Naive thymus-derived CD4-positive, alpha-beta T cell (primary cell): ENCODE measurements at regions of chr6 and their contacts with region 1.

Region 1: DNA sequence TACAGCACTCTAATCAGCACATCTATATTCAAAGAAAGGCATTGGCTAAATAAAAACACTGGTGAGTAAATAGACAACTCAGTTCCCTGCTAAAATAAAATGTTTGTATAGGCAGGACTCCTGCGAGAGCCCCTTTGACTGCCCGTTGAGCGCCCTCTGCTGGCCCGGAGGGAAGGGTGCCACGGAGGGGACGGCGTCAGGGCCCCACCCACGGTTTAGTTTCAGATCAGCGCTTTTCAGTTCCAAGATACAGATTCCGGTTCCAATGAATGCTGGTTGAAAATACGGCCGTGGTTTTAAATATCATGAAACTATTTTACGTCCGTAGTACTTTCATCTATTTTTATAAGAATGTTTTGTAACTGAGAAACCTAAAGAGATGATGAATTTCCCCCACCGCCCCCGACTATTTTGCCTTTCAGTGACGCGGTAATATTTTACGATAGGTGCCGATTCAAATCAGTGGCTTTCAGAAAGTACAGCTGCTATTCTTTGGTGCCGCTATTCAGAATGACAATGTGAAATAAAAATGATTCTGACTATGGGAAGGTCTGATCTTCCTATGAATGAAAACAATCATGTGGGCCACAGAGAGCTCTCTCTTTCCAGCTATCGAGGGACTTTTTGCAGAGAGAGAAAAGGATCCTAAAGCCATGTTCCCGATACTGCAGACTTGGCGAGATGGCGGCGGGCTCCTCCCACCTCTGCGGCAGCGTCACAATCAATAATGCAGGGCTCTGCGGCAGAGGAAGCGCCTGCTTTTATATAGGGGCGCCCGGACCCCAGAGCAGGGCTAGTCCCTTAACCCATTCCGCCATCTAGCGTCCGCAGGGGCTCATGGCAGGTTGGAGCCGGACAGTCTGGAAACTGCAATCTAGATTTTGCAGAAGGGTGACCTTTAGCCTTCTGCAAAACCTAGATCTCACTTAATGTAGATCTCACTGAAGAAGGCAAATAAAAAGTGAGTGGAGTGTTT is 10.6 kb upstream of the CCN6 start:
- DNase-seq: peak; percentile 82 to 93 (median 90)
- ATAC-seq: peak; percentile 95
- H3K4me3 ChIP-seq: peak overlapping the region; percentile 92
- H3K4me3 Mint-ChIP-seq: peak overlapping the region; percentile 92 to 99 (median 98)
- H3K27ac ChIP-seq: peak overlapping the region; percentile 91
- H3K27ac Mint-ChIP-seq: peak overlapping the region; percentile 96 to 100 (median 99)
- H3K4me1 ChIP-seq: peaks cover 5 to 24% of the 10 kb centered on the region in 2 donors
- H3K4me1 Mint-ChIP-seq: peaks cover 10 to 51% (median 35%) of the 10 kb centered on the region in 7 donors
- H3K27me3 ChIP-seq: no peaks in the 10 kb centered on the region
- H3K27me3 Mint-ChIP-seq: no peaks in the 10 kb centered on the region

Region 2: GRCh38 chr6:111057074-111057752 is 986.1 kb before region 1 on chr6:
- CTCF ChIA-PET with region 1: no interaction called
- POLR2A ChIA-PET with region 1: no interaction called
- intact Hi-C with region 1: loop called (anchors 1 kb)
- DNase-seq: peak in 6 of 9 donors; percentile 22 to 54 (median 40)
- ATAC-seq: peak; percentile 76
- H3K4me3 ChIP-seq: no peak overlapping the region
- H3K4me3 Mint-ChIP-seq: peak overlapping the region in 1 of 10 donors; percentile 4
- H3K27ac ChIP-seq: no peak overlapping the region
- H3K27ac Mint-ChIP-seq: no peak overlapping the region
- H3K4me1 ChIP-seq: no peaks in the 10 kb centered on the region
- H3K4me1 Mint-ChIP-seq: peaks cover 0 to 6% (median 2%) of the 10 kb centered on the region in 7 donors
- H3K27me3 ChIP-seq: no peaks in the 10 kb centered on the region
- H3K27me3 Mint-ChIP-seq: peaks cover 0 to 6% (median 0%) of the 10 kb centered on the region in 5 donors

Region 3: GRCh38 chr6:111478749-111479148 is 564.6 kb before region 1 on chr6:
- CTCF ChIA-PET with region 1: interaction called, 5 read pairs
- POLR2A ChIA-PET with region 1: no interaction called
- intact Hi-C with region 1: loop called (anchors 1 kb)
- DNase-seq: peak in 7 of 9 donors; percentile 23 to 61 (median 44)
- ATAC-seq: peak; percentile 21
- H3K4me3 ChIP-seq: no peak overlapping the region
- H3K4me3 Mint-ChIP-seq: peak overlapping the region in 1 of 10 donors; percentile 26
- H3K27ac ChIP-seq: peak overlapping the region; percentile 24
- H3K27ac Mint-ChIP-seq: peak overlapping the region in 7 of 9 donors; percentile 31 to 77 (median 62)
- H3K4me1 ChIP-seq: peaks cover 13 to 14% of the 10 kb centered on the region in 2 donors
- H3K4me1 Mint-ChIP-seq: peaks cover 28 to 57% (median 50%) of the 10 kb centered on the region in 7 donors
- H3K27me3 ChIP-seq: no peaks in the 10 kb centered on the region
- H3K27me3 Mint-ChIP-seq: no peaks in the 10 kb centered on the region

Region 4: GRCh38 chr6:111709615-111710398 is 333.5 kb before region 1 on chr6:
- CTCF ChIA-PET with region 1: interaction called, 61 read pairs
- POLR2A ChIA-PET with region 1: interaction called, 6 read pairs
- intact Hi-C with region 1: loop called (anchors 1 kb)
- DNase-seq: peak in 8 of 9 donors; percentile 43 to 78 (median 71)
- ATAC-seq: peak; percentile 89
- H3K4me3 ChIP-seq: no peak overlapping the region
- H3K4me3 Mint-ChIP-seq: peak overlapping the region in 8 of 10 donors; percentile 2 to 67 (median 53)
- H3K27ac ChIP-seq: peak overlapping the region; percentile 59
- H3K27ac Mint-ChIP-seq: peak overlapping the region; percentile 53 to 98 (median 93)
- H3K4me1 ChIP-seq: peaks cover 32 to 43% of the 10 kb centered on the region in 2 donors
- H3K4me1 Mint-ChIP-seq: peaks cover 32 to 64% (median 56%) of the 10 kb centered on the region in 7 donors
- H3K27me3 ChIP-seq: no peaks in the 10 kb centered on the region
- H3K27me3 Mint-ChIP-seq: no peaks in the 10 kb centered on the region

Region 5: DNA sequence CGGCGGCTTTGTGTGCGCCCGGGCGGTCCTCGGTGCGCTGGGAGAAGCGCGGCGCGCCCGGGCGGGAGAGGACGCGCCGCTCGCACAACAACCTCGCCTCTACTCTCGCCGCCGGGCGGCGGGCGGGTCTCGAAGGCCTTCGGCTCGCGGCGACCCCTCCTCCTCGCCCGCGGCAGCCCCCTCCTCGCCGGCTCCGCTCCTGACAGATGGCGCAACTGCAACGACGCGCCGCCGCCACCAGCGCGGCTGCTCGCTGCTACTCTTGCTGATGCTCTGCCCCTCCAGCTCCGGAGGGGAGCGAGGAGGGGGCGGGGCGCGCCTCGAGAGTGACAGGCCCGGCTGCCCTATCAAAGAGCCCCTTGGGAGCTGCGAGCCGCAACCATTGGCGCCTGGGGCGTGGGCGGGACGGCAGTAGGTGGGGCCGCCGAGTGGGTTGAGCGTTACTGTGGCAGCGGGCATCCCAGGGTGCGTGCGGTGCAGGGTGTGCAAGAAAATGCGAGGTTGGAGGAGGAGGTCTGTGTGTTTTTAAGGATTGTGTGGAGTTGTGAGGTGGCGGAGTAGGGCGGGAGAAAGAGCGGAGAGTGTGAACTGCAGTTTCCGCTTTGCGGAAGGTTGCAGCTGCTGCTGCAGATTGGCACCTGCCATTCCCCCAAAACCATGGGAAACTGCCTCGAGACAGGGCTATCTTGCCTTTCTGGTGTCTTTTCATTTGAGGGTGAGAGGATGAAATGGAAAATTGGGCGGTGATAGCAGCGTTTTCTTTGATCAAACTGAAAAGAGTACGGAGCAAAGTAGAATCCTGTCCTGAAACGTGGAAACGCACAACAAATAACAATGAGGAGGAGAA is 169.9 kb before region 1 on chr6 and contains the start of gene FYN:
- CTCF ChIA-PET with region 1: interaction called, 3 read pairs
- POLR2A ChIA-PET with region 1: interaction called, 13 read pairs
- intact Hi-C with region 1: loop called (anchors 1 kb)
- DNase-seq: peak; percentile 97 to 100 (median 99)
- ATAC-seq: peak; percentile 96
- H3K4me3 ChIP-seq: peak within 1 kb of the TSS; percentile 89
- H3K4me3 Mint-ChIP-seq: peak within 1 kb of the TSS; percentile 95 to 100 (median 98)
- H3K27ac ChIP-seq: peak within 1 kb of the TSS; percentile 86
- H3K27ac Mint-ChIP-seq: peak within 1 kb of the TSS; percentile 93 to 99 (median 96)
- H3K4me1 ChIP-seq: peaks cover 32 to 34% of the 10 kb centered on the region in 2 donors
- H3K4me1 Mint-ChIP-seq: peaks cover 22 to 45% (median 38%) of the 10 kb centered on the region in 7 donors
- H3K27me3 ChIP-seq: no peaks in the 10 kb centered on the region
- H3K27me3 Mint-ChIP-seq: no peaks in the 10 kb centered on the region
- total RNA-seq, gene FYN: 200 to 720 (median 447) TPM

Region 6: GRCh38 chr6:111950661-111951496 is 92.4 kb before region 1 on chr6:
- CTCF ChIA-PET with region 1: no interaction called
- POLR2A ChIA-PET with region 1: no interaction called
- intact Hi-C with region 1: no loop called
- DNase-seq: no peak
- ATAC-seq: no peak
- H3K4me3 ChIP-seq: no peak overlapping the region
- H3K4me3 Mint-ChIP-seq: no peak overlapping the region
- H3K27ac ChIP-seq: no peak overlapping the region
- H3K27ac Mint-ChIP-seq: no peak overlapping the region
- H3K4me1 ChIP-seq: no peaks in the 10 kb centered on the region
- H3K4me1 Mint-ChIP-seq: peaks cover 7 to 22% (median 18%) of the 10 kb centered on the region in 7 donors
- H3K27me3 ChIP-seq: no peaks in the 10 kb centered on the region
- H3K27me3 Mint-ChIP-seq: peaks cover 0 to 31% (median 0%) of the 10 kb centered on the region in 5 donors

Region 7: DNA sequence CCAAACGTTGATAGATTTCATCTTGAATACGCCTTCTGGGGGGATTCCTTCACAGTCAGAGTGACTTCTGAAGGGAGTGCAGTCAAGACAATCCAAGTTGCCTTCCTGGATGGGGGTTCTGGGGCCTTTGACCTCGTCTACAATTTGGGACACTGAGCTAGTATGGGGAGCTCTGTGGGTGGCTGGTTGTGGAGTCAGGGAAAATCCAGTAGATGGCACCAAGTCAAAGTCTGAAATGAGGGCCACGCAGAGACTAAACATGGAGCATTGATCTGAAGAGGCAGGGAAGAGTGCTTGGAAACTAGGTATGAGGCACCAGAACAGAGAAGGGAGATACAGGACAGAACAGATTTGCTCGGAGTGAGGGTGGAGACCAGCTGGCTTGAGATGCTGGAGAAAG is 33.0 kb before region 1 on chr6:
- CTCF ChIA-PET with region 1: interaction called, 339 read pairs
- POLR2A ChIA-PET with region 1: interaction called, 175 read pairs
- intact Hi-C with region 1: loop called (anchors 1 kb)
- DNase-seq: peak in 5 of 9 donors; percentile 37 to 57 (median 45)
- ATAC-seq: peak; percentile 56
- H3K4me3 ChIP-seq: no peak overlapping the region
- H3K4me3 Mint-ChIP-seq: peak overlapping the region in 1 of 10 donors; percentile 9
- H3K27ac ChIP-seq: no peak overlapping the region
- H3K27ac Mint-ChIP-seq: peak overlapping the region in 7 of 9 donors; percentile 0 to 41 (median 7)
- H3K4me1 ChIP-seq: no peaks in the 10 kb centered on the region
- H3K4me1 Mint-ChIP-seq: peaks cover 6 to 22% (median 14%) of the 10 kb centered on the region in 7 donors
- H3K27me3 ChIP-seq: no peaks in the 10 kb centered on the region
- H3K27me3 Mint-ChIP-seq: no peaks in the 10 kb centered on the region

Region 8: GRCh38 chr6:112087136-112087911 is 44.0 kb after region 1 on chr6 and contains the starts of genes FAM229B and TUBE1:
- CTCF ChIA-PET with region 1: no interaction called
- POLR2A ChIA-PET with region 1: no interaction called
- intact Hi-C with region 1: loop called (anchors 1 kb)
- DNase-seq: peak; percentile 70 to 96 (median 90)
- ATAC-seq: peak; percentile 98
- H3K4me3 ChIP-seq: peak within 1 kb of the TSS; percentile 64
- H3K4me3 Mint-ChIP-seq: no peak within 1 kb of the TSS
- H3K27ac ChIP-seq: peak within 1 kb of the TSS; percentile 87
- H3K27ac Mint-ChIP-seq: peak within 1 kb of the TSS in 1 of 9 donors; percentile 65
- H3K4me1 ChIP-seq: peaks cover 0 to 7% of the 10 kb centered on the region in 2 donors
- H3K4me1 Mint-ChIP-seq: peaks cover 0 to 18% (median 10%) of the 10 kb centered on the region in 7 donors
- H3K27me3 ChIP-seq: peaks cover 0 to 3% of the 10 kb centered on the region in 2 donors
- H3K27me3 Mint-ChIP-seq: peaks cover 0 to 37% (median 6%) of the 10 kb centered on the region in 5 donors
- total RNA-seq, gene FAM229B: 0.70 to 5.8 (median 2.0) TPM
- total RNA-seq, gene TUBE1: 19.3 to 50.0 (median 35.1) TPM

Region 9: GRCh38 chr6:112282221-112282620 is 238.9 kb after region 1 on chr6:
- CTCF ChIA-PET with region 1: no interaction called
- POLR2A ChIA-PET with region 1: no interaction called
- intact Hi-C with region 1: no loop called
- DNase-seq: no peak
- ATAC-seq: no peak
- H3K4me3 ChIP-seq: no peak overlapping the region
- H3K4me3 Mint-ChIP-seq: no peak overlapping the region
- H3K27ac ChIP-seq: no peak overlapping the region
- H3K27ac Mint-ChIP-seq: no peak overlapping the region
- H3K4me1 ChIP-seq: peaks cover 0 to 17% of the 10 kb centered on the region in 2 donors
- H3K4me1 Mint-ChIP-seq: peaks cover 0 to 16% (median 9%) of the 10 kb centered on the region in 7 donors
- H3K27me3 ChIP-seq: no peaks in the 10 kb centered on the region
- H3K27me3 Mint-ChIP-seq: peaks cover 20 to 73% (median 42%) of the 10 kb centered on the region in 5 donors